ENCODE measurements at regions of chrX and their contacts with region 1.

Region 1: GRCh38 chrX:119130911-119131310 is 3.3 kb upstream of the KIAA1210 start:
- DNase-seq: no peak
- ATAC-seq: no peak
- H3K4me3 ChIP-seq: no peak overlapping the region
- H3K27ac ChIP-seq: no peak overlapping the region
- H3K4me1 ChIP-seq: no peaks in the 10 kb centered on the region
- H3K27me3 ChIP-seq: no peaks in the 10 kb centered on the region; a peak in 3 of 4 replicates
- CTCF ChIP-seq: no peak
- EP300 ChIP-seq: no peak
- POLR2A ChIP-seq: no peak
- RAD21 ChIP-seq: no peak

Region 2: DNA sequence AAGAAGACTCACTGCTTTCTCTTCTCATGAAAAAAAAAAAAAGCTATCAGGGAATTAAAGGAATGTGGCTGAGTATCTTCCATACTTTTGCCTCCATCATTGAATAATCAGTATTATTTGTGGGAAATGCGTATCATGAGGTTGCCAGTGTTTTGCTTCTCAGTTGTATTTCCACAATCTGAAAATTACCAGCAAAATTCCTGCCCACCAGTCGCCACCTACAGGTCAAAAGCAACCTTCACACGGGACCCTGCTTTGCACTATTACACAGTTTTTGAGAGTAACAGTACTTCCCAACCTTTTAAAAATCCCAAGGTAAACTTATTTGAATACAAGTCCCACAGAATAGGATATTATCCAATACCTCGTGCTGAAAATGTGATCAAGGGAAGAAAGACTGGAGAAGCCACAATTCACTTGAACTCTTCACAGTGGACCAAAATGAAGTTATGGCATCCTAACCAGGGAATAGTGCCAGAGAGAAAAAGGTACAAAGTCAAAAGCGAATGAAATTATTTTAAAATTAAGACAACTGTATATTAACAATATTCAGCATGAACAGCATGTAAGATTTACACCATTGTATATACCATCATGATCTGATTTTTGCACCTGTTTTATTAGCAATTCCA is 135.6 kb after region 1 on chrX:
- CTCF ChIA-PET with region 1: no interaction called
- POLR2A ChIA-PET with region 1: no interaction called
- RAD21 ChIA-PET with region 1: no interaction called
- SMC1A ChIA-PET with region 1: no interaction called
- in situ Hi-C with region 1: no loop called
- intact Hi-C with region 1: loop called (anchors 5 kb)
- DNase-seq: no peak
- ATAC-seq: peak; percentile 74
- H3K4me3 ChIP-seq: no peak overlapping the region
- H3K27ac ChIP-seq: no peak overlapping the region
- H3K4me1 ChIP-seq: no peaks in the 10 kb centered on the region
- H3K27me3 ChIP-seq: no peaks in the 10 kb centered on the region
- CTCF ChIP-seq: peak; percentile 72 to 85 (median 82)
- EP300 ChIP-seq: no peak
- POLR2A ChIP-seq: no peak
- RAD21 ChIP-seq: peak; percentile 58

Measured in GM12878 (cell line).